ENCODE measurements at regions of chr14 and their contacts with region 1.

Region 1: GRCh38 chr14:68199554-68200151 is 380.1 kb downstream of the RAD51B start:
- DNase-seq: no peak

Region 2: GRCh38 chr14:68146807-68147206 is 52.8 kb before region 1 on chr14:
- intact Hi-C with region 1: loop called (anchors 5 kb)
- DNase-seq: no peak